ENCODE measurements at regions of chr15 and their contacts with region 1.

Region 1: GRCh38 chr15:78407608-78408354 is 30.2 kb upstream of the IREB2 start:
- DNase-seq: no peak
- ATAC-seq: 0 out of 6 replicates have a peak, but pooled peaks of 1 of the 2 experiments have one; percentile 17
- H3K4me3 ChIP-seq: no peak overlapping the region
- H3K27ac ChIP-seq: no peak overlapping the region
- H3K4me1 ChIP-seq: no peaks in the 10 kb centered on the region
- CTCF ChIP-seq: no peak
- EP300 ChIP-seq: no peak
- POLR2A ChIP-seq: no peak
- RAD21 ChIP-seq: no peak

Region 2: GRCh38 chr15:78131295-78132061 is 276.3 kb before region 1 on chr15 and contains the start of gene CIB2:
- CTCF ChIA-PET with region 1: no interaction called
- POLR2A ChIA-PET with region 1: no interaction called
- DNase-seq: peak; percentile 71 to 92
- ATAC-seq: peak; percentile 84 to 87
- H3K4me3 ChIP-seq: peak within 1 kb of the TSS; percentile 86
- H3K27ac ChIP-seq: peak within 1 kb of the TSS; percentile 91 to 94
- H3K4me1 ChIP-seq: peaks cover 38% of the 10 kb centered on the region
- CTCF ChIP-seq: peak; percentile 85
- EP300 ChIP-seq: no peak
- POLR2A ChIP-seq: peak; percentile 74
- RAD21 ChIP-seq: peak; percentile 61 to 81
- polyA plus RNA-seq, gene CIB2: 16.4 and 21.2 TPM in 2 replicates

Region 3: DNA sequence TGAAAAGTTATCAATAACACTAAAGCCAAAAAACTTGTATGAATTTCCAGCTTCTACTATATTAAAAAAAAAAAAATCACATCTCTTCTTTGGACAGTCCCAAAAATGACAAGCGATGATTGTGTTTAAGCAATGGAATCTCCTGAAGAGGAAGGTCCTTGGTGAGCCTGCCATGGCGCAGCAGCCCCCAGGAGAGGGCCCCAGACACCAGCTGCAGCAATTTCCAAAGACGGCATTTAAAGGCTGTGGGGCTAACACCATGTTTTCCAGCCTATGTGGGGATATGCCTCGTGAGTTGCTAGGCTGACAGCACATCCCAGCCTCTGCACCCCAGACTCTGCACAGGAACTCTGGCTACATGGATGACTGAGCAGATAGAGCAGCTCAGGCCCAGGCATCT is 123.0 kb before region 1 on chr15:
- CTCF ChIA-PET with region 1: no interaction called
- POLR2A ChIA-PET with region 1: no interaction called
- DNase-seq: no peak
- ATAC-seq: no peak; a peak in 1 of 6 replicates
- H3K4me3 ChIP-seq: no peak overlapping the region
- H3K27ac ChIP-seq: no peak overlapping the region
- H3K4me1 ChIP-seq: no peaks in the 10 kb centered on the region
- CTCF ChIP-seq: no peak; the same call in 2 of the 3 replicates
- EP300 ChIP-seq: no peak
- POLR2A ChIP-seq: no peak
- RAD21 ChIP-seq: 0 out of 5 replicates have a peak, but pooled peaks of 1 of the 2 experiments have one; percentile 10

Region 4: DNA sequence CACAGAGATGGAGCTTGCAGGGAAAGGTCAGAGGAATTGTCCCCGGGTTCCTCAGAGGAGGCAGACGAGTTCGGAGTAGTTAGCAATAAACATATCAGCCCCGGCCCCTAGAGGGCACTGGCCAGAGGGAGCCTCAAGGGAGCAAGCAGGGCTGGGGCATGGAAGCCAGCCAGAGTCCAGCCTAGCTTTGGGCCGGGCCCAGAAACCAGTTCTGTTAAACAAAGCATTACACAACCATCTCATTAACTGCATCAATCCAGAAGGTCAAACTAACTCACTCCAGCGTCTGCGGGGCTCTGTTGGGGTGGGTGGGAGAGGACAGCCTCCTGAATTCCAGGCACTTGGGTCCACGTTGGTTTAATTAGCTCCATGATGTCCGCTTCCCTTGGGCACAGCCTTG is 10.8 kb before region 1 on chr15:
- CTCF ChIA-PET with region 1: interaction called, 11 read pairs
- POLR2A ChIA-PET with region 1: no interaction called
- DNase-seq: peak; percentile 31 to 38
- ATAC-seq: peak; percentile 58 to 86; a peak in 5 of 6 replicates
- H3K4me3 ChIP-seq: no peak overlapping the region
- H3K27ac ChIP-seq: no peak overlapping the region
- H3K4me1 ChIP-seq: no peaks in the 10 kb centered on the region
- CTCF ChIP-seq: peak; percentile 26; the same call in 2 of the 3 replicates
- EP300 ChIP-seq: no peak
- POLR2A ChIP-seq: no peak
- RAD21 ChIP-seq: 0 out of 5 replicates have a peak, but pooled peaks of 1 of the 2 experiments have one; percentile 11

Region 5: GRCh38 chr15:78469031-78469430 is 61.2 kb after region 1 on chr15:
- CTCF ChIA-PET with region 1: no interaction called
- POLR2A ChIA-PET with region 1: no interaction called
- DNase-seq: no peak
- ATAC-seq: no peak
- H3K4me3 ChIP-seq: no peak overlapping the region
- H3K27ac ChIP-seq: no peak overlapping the region
- H3K4me1 ChIP-seq: no peaks in the 10 kb centered on the region
- CTCF ChIP-seq: no peak
- EP300 ChIP-seq: no peak
- POLR2A ChIP-seq: no peak
- RAD21 ChIP-seq: no peak

Region 6: DNA sequence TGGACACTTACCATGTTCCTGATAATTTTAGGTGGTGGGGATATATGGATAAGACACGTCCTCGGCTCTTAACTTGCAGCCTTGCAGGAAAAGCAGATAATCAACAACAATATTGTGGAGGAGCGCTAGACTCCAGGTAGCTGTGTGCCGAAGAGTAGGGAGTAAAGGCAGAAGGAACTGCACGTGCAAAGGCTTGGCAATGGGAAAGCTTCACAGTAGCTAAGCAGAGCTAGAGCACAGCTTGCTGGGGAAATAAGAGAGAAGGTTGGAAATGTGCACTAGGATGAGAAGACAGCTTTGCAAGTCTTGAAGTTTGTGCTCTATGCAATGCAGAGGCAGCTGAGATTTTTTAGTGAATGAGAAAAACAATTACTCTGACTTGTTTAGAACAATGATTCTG is 144.8 kb after region 1 on chr15:
- CTCF ChIA-PET with region 1: no interaction called
- POLR2A ChIA-PET with region 1: no interaction called
- DNase-seq: no peak
- ATAC-seq: peak; percentile 44 to 48; a peak in 4 of 6 replicates
- H3K4me3 ChIP-seq: no peak overlapping the region
- H3K27ac ChIP-seq: no peak overlapping the region
- H3K4me1 ChIP-seq: no peaks in the 10 kb centered on the region
- CTCF ChIP-seq: no peak
- EP300 ChIP-seq: no peak
- POLR2A ChIP-seq: no peak
- RAD21 ChIP-seq: no peak